ENCODE measurements at regions of chr6 and their contacts with region 1.

Region 1: DNA sequence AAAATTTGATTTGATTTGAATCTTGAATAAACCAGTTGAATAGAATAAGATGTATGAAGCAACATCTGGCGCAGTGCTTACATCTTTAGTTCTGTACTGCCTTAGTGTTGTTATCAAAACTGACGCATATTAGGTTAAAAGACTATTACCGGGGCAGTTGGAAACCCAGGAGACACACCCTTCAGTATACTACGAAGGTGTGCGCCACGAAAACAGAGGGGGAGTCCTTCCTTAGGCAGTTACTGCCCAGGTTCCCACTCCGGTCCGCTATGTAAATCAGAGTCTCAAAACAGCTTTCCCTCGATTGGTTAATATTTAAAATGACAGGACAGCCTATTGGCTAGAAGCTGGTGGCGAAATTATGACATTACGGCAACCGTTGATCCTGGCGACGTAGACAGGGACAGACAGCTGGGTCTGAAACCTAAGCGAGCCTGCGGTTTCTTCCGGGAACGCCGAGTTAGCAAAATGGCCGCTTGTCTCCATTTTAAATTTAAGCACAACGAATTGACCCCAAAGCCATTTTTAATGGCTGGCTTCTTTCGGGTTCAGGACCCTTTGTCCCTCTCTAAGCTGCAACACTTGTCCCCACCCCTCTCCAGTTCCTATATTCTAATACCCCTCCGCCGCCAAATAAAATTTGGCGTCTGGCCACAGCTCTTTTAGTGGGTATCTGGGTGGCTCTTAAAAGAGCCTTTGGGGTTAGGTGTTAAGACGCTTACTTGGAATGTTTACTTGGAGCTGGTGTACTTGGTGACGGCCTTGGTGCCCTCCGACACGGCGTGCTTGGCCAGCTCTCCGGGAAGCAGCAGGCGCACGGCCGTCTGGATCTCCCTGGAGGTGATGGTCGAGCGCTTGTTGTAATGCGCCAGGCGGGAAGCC is 35.8 kb downstream of the HFE start:
- DNase-seq: peak; percentile 94
- H3K4me3 ChIP-seq: peak overlapping the region; percentile 72
- CTCF ChIP-seq: no peak

Region 2: DNA sequence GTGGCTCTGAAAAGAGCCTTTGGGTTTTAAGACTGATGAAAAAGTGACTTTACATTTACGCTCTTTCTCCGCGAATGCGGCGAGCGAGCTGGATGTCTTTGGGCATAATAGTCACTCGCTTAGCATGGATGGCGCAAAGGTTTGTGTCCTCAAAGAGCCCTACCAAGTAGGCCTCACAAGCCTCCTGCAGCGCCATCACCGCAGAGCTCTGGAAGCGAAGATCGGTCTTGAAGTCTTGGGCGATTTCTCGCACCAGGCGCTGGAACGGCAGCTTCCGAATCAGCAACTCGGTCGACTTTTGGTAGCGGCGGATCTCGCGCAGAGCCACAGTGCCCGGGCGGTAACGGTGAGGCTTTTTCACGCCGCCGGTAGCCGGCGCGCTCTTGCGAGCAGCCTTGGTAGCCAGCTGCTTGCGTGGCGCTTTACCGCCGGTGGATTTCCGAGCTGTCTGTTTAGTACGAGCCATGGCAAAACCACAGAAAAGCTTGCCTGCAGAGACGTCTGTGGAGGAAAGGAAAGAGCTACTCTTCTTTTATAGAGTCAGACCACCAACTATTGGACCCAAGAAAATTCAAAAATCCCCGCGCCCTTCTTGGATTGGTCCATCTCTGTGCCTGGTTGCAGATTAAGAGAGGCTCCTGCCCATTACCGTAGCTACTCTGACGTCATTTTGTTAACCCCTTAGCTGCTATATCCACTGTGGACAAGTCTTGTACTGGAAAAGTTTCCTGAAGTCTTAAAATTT is 91.3 kb before region 1 on chr6:
- CTCF ChIA-PET with region 1: interaction called, 8 read pairs
- POLR2A ChIA-PET with region 1: interaction called, 33 read pairs
- DNase-seq: no peak
- H3K4me3 ChIP-seq: peak overlapping the region; percentile 69
- CTCF ChIP-seq: peak; percentile 20

Region 3: GRCh38 chr6:26065952-26066380 is 57.1 kb before region 1 on chr6:
- CTCF ChIA-PET with region 1: interaction called, 10 read pairs
- POLR2A ChIA-PET with region 1: interaction called, 3 read pairs
- DNase-seq: no peak
- H3K4me3 ChIP-seq: no peak overlapping the region
- CTCF ChIP-seq: peak; percentile 75

Region 4: GRCh38 chr6:26136321-26136720 is 13.3 kb after region 1 on chr6:
- CTCF ChIA-PET with region 1: interaction called, 5 read pairs
- POLR2A ChIA-PET with region 1: interaction called, 12 read pairs
- DNase-seq: no peak
- H3K4me3 ChIP-seq: no peak overlapping the region
- CTCF ChIP-seq: no peak

Region 5: DNA sequence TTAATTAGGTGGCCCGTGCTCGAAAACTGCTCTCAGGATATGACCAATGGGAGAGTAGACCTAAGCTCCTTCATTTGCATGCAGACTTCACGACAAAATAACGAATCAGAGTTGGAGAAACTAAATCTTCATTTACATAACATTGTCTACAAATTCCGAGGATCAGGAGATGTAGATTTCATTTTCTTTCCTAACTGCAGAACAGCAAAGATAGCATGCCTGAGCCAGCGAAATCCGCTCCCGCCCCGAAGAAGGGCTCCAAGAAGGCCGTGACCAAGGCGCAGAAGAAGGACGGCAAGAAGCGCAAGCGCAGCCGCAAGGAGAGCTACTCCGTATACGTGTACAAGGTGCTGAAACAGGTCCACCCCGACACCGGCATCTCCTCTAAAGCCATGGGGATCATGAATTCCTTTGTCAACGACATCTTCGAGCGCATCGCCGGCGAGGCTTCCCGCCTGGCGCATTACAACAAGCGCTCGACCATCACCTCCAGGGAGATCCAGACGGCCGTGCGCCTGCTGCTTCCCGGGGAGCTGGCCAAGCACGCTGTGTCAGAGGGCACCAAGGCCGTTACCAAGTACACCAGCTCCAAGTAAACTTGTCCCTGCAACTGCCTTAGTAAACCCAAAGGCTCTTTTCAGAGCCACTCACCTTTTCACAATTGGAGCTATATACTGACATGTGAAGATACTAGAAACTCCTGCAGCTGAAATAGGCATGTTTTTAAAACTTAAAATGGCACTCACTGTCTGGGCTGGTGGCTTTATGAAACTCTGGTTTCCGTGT is 60.7 kb after region 1 on chr6:
- CTCF ChIA-PET with region 1: no interaction called
- POLR2A ChIA-PET with region 1: interaction called, 19 read pairs
- DNase-seq: no peak
- H3K4me3 ChIP-seq: peak overlapping the region; percentile 57
- CTCF ChIP-seq: no peak

Region 6: GRCh38 chr6:26216356-26216885 is 93.4 kb after region 1 on chr6:
- CTCF ChIA-PET with region 1: interaction called, 3 read pairs
- POLR2A ChIA-PET with region 1: interaction called, 52 read pairs
- DNase-seq: peak; percentile 98
- H3K4me3 ChIP-seq: peak overlapping the region; percentile 67
- CTCF ChIP-seq: no peak